Aorta (tissue), 5 donors: ENCODE measurements at regions of chr10 and their contacts with region 1.

Region 1: GRCh38 chr10:68331455-68332258 is at the start of gene HNRNPH3:
- DNase-seq: peak; percentile 99
- ATAC-seq: peak; percentile 97
- H3K4me3 ChIP-seq: peak within 1 kb of the TSS; percentile 60 to 94
- H3K27ac ChIP-seq: peak within 1 kb of the TSS; percentile 84 to 95
- H3K4me1 ChIP-seq: peaks cover 0 to 8% of the 10 kb centered on the region in 2 donors
- H3K27me3 ChIP-seq: no peaks in the 10 kb centered on the region
- total RNA-seq, gene HNRNPH3: 106 to 121 TPM

Region 2: GRCh38 chr10:67884313-67884841 is 447.3 kb before region 1 on chr10 and contains the start of gene SIRT1:
- intact Hi-C with region 1: loop called (anchors 1 to 10 kb)
- DNase-seq: peak; percentile 98 to 99
- ATAC-seq: peak; percentile 97
- H3K4me3 ChIP-seq: peak within 1 kb of the TSS; percentile 85 to 91
- H3K27ac ChIP-seq: peak within 1 kb of the TSS; percentile 87 to 94
- H3K4me1 ChIP-seq: peaks cover 2 to 4% of the 10 kb centered on the region in 2 donors
- H3K27me3 ChIP-seq: no peaks in the 10 kb centered on the region
- total RNA-seq, gene SIRT1: 21.7 to 24.8 TPM

Region 3: GRCh38 chr10:68074775-68075549 is 256.7 kb before region 1 on chr10 and contains the start of gene HERC4:
- intact Hi-C with region 1: loop called in 1 of 2 experiments (anchors 10 kb)
- DNase-seq: peak; percentile 97 to 99
- ATAC-seq: peak; percentile 99
- H3K4me3 ChIP-seq: peak within 1 kb of the TSS; percentile 91 to 94
- H3K27ac ChIP-seq: peak within 1 kb of the TSS; percentile 83 to 97
- H3K4me1 ChIP-seq: no peaks in the 10 kb centered on the region
- H3K27me3 ChIP-seq: no peaks in the 10 kb centered on the region
- total RNA-seq, gene HERC4: 81.9 to 108 TPM

Region 4: DNA sequence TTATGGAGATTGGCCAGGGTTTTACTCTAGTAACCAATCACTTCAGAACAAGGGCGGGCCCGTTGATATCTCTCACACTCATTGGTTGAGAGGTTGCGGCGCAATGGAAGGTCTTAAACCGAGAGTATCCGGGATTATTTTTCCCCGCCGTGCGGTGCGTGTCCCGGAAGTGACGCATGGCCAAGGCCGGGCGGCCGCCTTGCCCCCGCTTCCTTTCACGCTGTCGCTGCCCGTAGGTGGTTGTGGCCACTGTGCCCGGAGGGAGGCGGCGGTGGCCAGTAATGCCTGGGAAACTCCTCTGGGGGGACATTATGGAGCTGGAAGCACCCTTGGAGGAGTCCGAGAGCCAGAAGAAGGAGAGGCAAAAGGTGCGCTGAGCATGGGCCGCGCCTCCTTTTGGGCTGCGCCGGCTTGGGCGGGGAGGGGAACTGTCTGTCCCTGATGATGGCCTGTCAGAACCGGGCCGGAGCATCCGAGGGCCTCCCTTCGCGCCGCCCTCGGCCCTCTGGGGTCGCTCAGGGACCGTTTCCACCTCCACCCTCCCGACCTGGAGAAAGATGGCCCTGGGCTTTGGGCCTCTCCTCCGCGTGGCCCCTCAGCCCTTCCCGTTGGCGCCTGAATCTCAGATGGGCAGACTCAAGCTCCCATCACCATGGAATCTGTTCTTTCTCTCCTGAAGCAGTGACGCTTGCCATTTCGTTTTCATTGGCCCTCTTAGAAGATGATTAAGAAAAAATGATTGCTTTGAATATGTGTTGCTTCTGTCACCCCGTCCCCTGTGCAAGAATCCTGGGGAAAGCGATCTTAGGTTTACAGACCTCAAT is 569.7 kb after region 1 on chr10 and contains the start of gene DDX50:
- intact Hi-C with region 1: loop called in 1 of 2 experiments (anchors 2 kb)
- DNase-seq: peak; percentile 98
- ATAC-seq: peak; percentile 99
- H3K4me3 ChIP-seq: peak within 1 kb of the TSS; percentile 44 to 60
- H3K27ac ChIP-seq: peak within 1 kb of the TSS; percentile 70 to 84
- H3K4me1 ChIP-seq: no peaks in the 10 kb centered on the region
- H3K27me3 ChIP-seq: no peaks in the 10 kb centered on the region
- total RNA-seq, gene DDX50: 32.0 to 36.5 TPM